CD8-positive, alpha-beta T cell (primary cell): ENCODE measurements at regions of chr5 and their contacts with region 1.

Region 1: DNA sequence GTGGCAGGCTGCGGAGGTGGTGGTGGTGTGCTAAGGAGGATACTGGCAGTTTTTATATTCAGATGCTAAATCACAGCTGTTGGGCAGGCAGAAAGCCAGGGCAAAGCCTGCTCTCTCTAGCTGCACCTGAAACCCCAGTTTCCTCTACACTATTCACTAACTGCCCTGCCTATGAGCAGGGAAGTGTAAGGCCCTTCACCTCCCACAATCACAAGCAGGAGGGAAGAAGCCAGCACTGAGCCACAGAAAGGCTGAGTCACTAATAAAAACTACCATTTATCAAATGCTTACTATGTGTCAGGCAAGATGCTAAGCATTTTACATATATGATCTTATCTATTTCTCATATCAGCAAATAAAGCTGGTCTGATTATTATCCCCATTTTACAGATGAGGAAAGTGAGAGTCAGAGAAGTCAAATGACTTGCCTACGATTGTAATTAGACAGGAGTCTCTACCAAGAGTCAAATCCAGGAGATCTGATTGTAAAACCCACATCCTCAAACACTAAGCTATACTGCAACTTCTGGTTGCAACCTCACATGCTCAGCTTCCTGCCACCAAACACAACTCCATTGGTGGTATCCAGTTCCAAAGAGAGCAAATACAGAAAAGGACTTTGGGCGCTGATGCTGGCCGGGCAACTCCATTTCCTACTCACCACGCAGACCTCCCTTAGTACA is 17.7 kb upstream of the IL6ST start:
- DNase-seq: peak in 6 of 9 experiments; percentile 9 to 60 (median 30)
- ATAC-seq: peak; percentile 91
- H3K4me3 ChIP-seq: no peak overlapping the region
- H3K4me3 Mint-ChIP-seq: no peak overlapping the region
- H3K27ac ChIP-seq: peak overlapping the region in 1 of 2 experiments; percentile 25
- H3K27ac Mint-ChIP-seq: peak overlapping the region; percentile 76
- H3K4me1 ChIP-seq: peaks cover 23% of the 10 kb centered on the region
- H3K4me1 Mint-ChIP-seq: peaks cover 26% of the 10 kb centered on the region
- H3K27me3 ChIP-seq: no peaks in the 10 kb centered on the region
- H3K27me3 Mint-ChIP-seq: no peaks in the 10 kb centered on the region
- CTCF ChIP-seq: no peak

Region 2: DNA sequence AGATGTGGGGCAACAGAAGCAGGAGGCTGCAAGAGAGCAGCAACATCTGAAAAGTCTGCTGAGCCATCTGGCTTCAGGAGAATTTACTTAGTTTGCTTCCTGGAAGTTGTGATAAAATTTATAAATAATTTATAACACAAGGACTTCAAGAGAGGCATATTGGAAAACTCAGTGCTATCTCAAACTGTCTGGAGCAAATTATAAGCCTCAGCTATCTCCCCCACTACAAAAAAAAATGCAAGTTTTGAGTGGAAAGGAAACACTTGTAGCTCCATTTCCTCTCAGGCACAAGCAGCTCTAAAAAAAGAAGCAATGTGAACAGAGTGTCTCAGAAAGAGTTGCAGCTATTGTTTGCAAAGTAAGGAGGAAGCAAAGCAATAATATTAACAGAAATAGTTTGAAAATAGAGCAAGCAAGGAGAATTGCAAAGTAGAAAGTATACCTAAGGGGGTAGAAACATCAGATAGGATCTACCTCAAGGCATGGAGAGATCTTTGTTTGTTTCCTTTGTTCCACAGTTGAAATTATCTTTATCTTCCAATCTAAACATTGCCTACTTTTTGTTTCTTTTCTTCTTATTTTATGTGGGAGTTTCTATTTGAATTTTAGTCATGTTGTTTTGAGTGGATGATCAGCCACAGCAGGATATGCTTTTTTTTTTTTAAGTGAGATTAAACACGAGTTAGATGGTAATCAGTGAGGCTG is 38.3 kb after region 1 on chr5:
- CTCF ChIA-PET with region 1: no interaction called
- POLR2A ChIA-PET with region 1: no interaction called
- intact Hi-C with region 1: loop called in 1 of 2 experiments (anchors 5 kb)
- DNase-seq: peak in 1 of 9 experiments; percentile 42
- ATAC-seq: peak; percentile 52
- H3K4me3 ChIP-seq: peak overlapping the region in 1 of 2 experiments; percentile 11
- H3K4me3 Mint-ChIP-seq: peak overlapping the region; percentile 68
- H3K27ac ChIP-seq: peak overlapping the region; percentile 2 to 32
- H3K27ac Mint-ChIP-seq: peak overlapping the region; percentile 83
- H3K4me1 ChIP-seq: peaks cover 67% of the 10 kb centered on the region
- H3K4me1 Mint-ChIP-seq: peaks cover 66% of the 10 kb centered on the region
- H3K27me3 ChIP-seq: no peaks in the 10 kb centered on the region
- H3K27me3 Mint-ChIP-seq: no peaks in the 10 kb centered on the region
- CTCF ChIP-seq: no peak

Region 3: GRCh38 chr5:56064984-56065383 is 52.6 kb after region 1 on chr5:
- CTCF ChIA-PET with region 1: no interaction called
- POLR2A ChIA-PET with region 1: no interaction called
- intact Hi-C with region 1: no loop called
- DNase-seq: no peak
- ATAC-seq: no peak
- H3K4me3 ChIP-seq: no peak overlapping the region
- H3K4me3 Mint-ChIP-seq: no peak overlapping the region
- H3K27ac ChIP-seq: no peak overlapping the region
- H3K27ac Mint-ChIP-seq: no peak overlapping the region
- H3K4me1 ChIP-seq: peaks cover 40% of the 10 kb centered on the region
- H3K4me1 Mint-ChIP-seq: peaks cover 49% of the 10 kb centered on the region
- H3K27me3 ChIP-seq: no peaks in the 10 kb centered on the region
- H3K27me3 Mint-ChIP-seq: no peaks in the 10 kb centered on the region
- CTCF ChIP-seq: no peak

Region 4: GRCh38 chr5:56696900-56697299 is 684.5 kb after region 1 on chr5:
- CTCF ChIA-PET with region 1: no interaction called
- POLR2A ChIA-PET with region 1: no interaction called
- intact Hi-C with region 1: no loop called
- DNase-seq: peak in 2 of 9 experiments; percentile 16 to 52
- ATAC-seq: no peak
- H3K4me3 ChIP-seq: no peak overlapping the region
- H3K4me3 Mint-ChIP-seq: no peak overlapping the region
- H3K27ac ChIP-seq: no peak overlapping the region
- H3K27ac Mint-ChIP-seq: no peak overlapping the region
- H3K4me1 ChIP-seq: peaks cover 25% of the 10 kb centered on the region
- H3K4me1 Mint-ChIP-seq: peaks cover 47% of the 10 kb centered on the region
- H3K27me3 ChIP-seq: no peaks in the 10 kb centered on the region
- H3K27me3 Mint-ChIP-seq: peaks cover 6% of the 10 kb centered on the region
- CTCF ChIP-seq: no peak